Testis (tissue), 5 donors: ENCODE measurements at regions of chr11 and their contacts with region 1.

Region 1: DNA sequence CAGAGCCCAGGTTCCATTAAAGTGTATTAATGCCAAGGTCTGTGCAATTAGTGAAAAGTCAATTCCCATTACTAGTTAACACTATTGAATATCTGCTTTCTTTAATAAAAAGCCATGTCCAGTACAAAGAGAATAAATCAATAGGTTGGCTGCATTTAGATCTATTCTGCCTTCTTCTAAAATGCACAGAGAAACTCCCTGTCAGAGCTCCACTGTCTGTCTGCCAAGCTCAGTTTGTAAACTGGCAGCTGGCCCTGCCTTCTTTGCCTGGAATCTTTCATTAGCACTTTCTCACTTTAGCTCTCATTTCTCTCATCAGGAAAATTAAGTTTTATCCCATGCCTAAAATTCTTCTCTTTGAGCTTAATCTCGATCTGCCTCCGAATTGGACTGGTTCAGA is 35.6 kb downstream of the ARL14EP start:
- DNase-seq: peak; percentile 27
- H3K4me3 ChIP-seq: no peak overlapping the region
- H3K27ac ChIP-seq: no peak overlapping the region
- H3K4me1 ChIP-seq: no peaks in the 10 kb centered on the region
- H3K27me3 ChIP-seq: no peaks in the 10 kb centered on the region
- CTCF ChIP-seq: no peak
- POLR2A ChIP-seq: no peak

Region 2: DNA sequence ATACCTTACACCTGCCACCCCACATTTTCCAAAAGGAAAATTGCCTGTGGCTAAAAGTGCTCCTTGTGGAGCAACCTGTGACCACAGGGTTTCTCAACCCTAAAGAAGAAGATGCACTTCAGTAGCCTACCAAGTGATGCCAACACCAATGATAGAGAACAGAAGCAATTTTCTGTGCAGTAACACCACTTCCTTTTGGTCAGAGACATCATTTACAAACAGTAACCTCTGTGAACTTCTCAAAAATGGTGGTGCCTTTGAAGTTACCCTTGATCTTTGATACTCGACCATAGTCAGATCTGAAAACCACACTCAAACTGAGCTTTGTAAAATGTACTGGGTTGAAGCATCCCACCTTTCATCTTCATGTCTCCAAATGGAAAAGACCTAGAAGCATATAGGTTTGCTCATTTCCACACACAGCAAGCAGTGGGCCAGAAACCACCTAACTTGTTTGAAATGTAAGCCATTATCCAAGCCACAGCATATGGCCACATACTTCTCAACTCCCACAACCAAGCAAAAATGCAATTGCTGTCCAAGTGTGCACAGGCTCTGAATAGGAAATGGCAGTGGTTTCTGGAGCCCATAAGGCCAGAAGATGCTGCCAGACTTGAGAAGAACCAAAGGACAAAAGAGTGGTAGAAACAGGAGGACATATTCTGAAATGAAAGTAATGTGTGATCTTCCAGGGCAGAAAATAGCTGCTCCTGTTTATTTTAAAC is 203.3 kb after region 1 on chr11:
- intact Hi-C with region 1: no loop called
- DNase-seq: no peak
- H3K4me3 ChIP-seq: no peak overlapping the region
- H3K27ac ChIP-seq: no peak overlapping the region
- H3K4me1 ChIP-seq: peaks cover 7% of the 10 kb centered on the region
- H3K27me3 ChIP-seq: no peaks in the 10 kb centered on the region
- CTCF ChIP-seq: no peak
- POLR2A ChIP-seq: no peak

Region 3: DNA sequence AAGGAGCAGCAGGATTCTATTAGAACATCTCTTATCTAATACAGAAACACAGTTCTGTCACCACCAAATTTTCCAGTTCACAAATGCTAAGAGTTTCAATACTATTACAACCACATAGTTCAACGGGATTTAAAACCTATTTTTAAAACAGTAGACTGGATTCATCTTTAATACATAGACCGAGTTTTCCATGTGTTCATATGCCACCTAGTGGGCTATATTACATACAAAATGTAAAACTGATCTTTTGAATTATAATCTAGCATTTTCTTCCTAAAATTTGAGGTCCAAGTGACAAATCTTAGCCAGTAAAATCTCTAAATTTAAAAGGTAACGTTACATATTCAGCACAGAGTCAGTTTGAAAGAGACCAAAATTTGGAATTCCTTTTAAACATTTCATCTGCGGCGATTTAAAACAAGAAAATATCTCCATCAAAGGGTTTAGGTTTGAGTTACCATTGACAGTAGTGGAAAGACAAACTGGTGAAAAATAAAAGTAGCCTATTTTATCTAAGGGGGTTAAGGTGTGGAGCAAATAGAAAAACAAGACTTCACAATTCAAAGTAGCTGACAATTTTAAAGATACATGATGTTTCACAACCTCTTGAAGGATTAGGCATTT is 497.0 kb after region 1 on chr11:
- intact Hi-C with region 1: loop called (anchors 10 kb)
- DNase-seq: no peak
- H3K4me3 ChIP-seq: no peak overlapping the region
- H3K27ac ChIP-seq: no peak overlapping the region
- H3K4me1 ChIP-seq: peaks cover 9% of the 10 kb centered on the region
- H3K27me3 ChIP-seq: no peaks in the 10 kb centered on the region
- CTCF ChIP-seq: peak; percentile 35 to 47 (median 44)
- POLR2A ChIP-seq: no peak